Calu3 (cell line): ENCODE measurements at regions of chr18 and their contacts with region 1.

Region 1: DNA sequence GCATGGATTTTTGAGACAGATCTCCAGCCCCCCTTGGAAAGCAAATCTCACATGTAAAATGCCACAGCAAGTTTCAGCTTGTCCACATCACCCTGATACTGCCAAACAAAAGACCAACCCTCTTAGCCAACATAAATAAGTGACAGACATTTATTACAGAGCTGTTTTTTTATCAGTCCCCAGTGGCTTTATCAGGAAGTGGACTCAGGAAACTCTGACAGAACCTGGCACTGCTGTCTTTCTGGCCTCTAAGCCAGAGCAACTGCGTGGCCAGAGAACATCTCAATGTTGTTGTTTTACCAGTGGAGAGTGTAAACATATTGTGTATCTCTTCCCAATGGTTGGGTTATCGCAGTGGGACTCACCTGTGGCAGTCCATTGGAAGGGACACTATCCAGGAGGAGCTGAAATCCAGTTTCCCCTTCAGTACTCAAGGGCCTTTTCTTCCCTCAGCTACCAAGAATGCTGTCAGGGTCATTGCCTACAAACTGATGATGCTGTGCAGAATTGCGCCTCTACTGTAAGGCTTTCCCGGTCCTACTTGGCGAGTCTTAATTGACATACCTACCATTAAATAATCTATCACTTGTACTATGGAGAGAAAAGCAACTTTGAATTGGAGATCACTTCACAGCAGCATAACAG is 22.0 kb downstream of the SLC14A1 start:
- DNase-seq: no peak
- H3K4me3 Mint-ChIP-seq: no peak overlapping the region
- H3K27ac Mint-ChIP-seq: peak overlapping the region; percentile 45
- H3K4me1 Mint-ChIP-seq: peaks cover 45% of the 10 kb centered on the region
- H3K27me3 Mint-ChIP-seq: no peaks in the 10 kb centered on the region
- CTCF ChIP-seq: no peak

Region 2: GRCh38 chr18:45775241-45775676 is 29.3 kb after region 1 on chr18:
- CTCF ChIA-PET with region 1: interaction called, 11 read pairs
- intact Hi-C with region 1: no loop called
- DNase-seq: peak; percentile 86
- H3K4me3 Mint-ChIP-seq: peak overlapping the region; percentile 89
- H3K27ac Mint-ChIP-seq: peak overlapping the region; percentile 60
- H3K4me1 Mint-ChIP-seq: peaks cover 21% of the 10 kb centered on the region
- H3K27me3 Mint-ChIP-seq: peaks cover 17% of the 10 kb centered on the region
- CTCF ChIP-seq: no peak

Region 3: GRCh38 chr18:45890606-45891005 is 144.7 kb after region 1 on chr18:
- CTCF ChIA-PET with region 1: no interaction called
- intact Hi-C with region 1: no loop called
- DNase-seq: no peak
- H3K4me3 Mint-ChIP-seq: no peak overlapping the region
- H3K27ac Mint-ChIP-seq: no peak overlapping the region
- H3K4me1 Mint-ChIP-seq: no peaks in the 10 kb centered on the region
- H3K27me3 Mint-ChIP-seq: no peaks in the 10 kb centered on the region
- CTCF ChIP-seq: no peak